ENCODE measurements at regions of chr2 and their contacts with region 1.

Region 1: DNA sequence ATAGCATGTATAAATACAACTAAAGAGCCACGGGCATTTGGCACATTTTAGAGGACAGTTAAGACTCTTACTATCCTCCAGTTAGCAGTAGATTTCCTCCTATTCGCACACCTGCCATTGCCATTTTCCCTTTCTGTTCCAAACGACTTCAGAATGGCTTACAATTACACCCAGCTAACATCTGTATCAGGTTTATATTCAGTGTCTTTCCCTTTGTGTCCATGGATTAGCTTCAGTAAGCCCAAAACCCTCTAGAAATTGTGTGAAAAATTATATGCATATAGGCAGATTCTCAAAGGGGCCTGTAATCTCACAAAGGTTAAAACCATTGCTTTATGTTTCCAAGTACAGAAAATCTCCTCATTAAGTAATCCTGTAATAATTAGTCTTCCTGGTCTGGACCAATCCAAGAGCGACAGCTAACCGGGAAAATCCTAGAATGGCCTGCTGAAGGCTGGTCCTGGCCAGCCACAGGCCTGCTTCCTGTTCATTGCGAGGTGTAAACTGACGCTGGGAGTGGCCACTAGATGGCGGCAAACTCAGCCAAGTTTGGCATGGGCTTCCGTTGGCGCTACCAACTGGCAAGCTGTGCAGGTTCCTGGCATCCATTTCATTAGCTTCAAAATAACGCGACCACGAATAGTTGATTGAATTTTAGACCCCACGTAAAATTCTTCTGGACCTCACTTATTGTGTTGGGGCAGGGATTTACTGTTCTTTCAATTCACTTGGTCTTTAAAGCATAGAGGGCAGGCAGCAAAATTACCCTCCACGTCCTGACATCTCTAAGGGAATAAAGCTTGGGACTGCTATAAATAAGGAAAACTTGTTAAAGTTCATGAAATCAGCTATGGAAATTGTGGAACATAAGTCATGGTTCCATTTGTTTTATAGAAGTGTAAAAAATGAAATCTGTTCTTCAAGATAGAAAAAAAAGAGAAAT is 17.1 kb downstream of the ARHGAP25 start:
- DNase-seq: peak; percentile 83
- H3K27ac ChIP-seq: no peak overlapping the region
- CTCF ChIP-seq: peak; percentile 86

Region 2: DNA sequence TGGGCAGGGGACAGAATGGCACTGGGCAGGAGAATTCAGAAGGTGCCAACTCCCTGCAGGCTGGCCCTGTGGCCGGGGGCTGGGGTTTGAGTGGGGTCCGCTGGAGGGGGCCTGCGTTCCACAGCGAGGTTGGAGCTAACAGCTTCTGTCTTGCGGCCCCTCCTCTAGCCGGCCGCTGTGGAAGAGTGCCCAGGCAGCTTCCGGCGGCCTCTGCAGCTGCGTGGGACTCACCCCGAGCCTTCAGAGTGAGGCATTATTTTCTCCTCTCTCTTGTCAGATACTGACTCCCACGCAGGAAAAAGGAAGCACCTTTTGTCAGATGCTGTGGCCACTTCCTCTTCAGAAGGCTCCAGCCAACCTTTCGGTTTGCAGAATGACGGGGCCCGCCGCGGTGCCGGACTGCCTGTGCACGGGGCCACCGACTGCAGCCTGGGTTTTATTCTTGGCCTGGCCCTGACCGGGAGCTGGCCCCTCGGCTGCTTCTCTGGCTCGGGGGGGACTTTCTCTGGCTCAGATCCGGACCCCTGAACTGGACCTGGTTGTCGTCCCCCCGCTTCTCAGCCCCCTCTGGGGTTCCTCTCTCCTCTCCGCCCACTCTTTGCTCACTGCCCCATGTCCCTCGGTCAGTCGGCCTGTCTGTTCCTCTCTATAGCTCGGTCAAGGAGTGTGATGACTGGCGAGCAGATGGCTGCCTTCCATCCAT is 23.1 kb after region 1 on chr2:
- CTCF ChIA-PET with region 1: no interaction called
- POLR2A ChIA-PET with region 1: no interaction called
- DNase-seq: no peak
- H3K27ac ChIP-seq: no peak overlapping the region
- CTCF ChIP-seq: no peak

Region 3: DNA sequence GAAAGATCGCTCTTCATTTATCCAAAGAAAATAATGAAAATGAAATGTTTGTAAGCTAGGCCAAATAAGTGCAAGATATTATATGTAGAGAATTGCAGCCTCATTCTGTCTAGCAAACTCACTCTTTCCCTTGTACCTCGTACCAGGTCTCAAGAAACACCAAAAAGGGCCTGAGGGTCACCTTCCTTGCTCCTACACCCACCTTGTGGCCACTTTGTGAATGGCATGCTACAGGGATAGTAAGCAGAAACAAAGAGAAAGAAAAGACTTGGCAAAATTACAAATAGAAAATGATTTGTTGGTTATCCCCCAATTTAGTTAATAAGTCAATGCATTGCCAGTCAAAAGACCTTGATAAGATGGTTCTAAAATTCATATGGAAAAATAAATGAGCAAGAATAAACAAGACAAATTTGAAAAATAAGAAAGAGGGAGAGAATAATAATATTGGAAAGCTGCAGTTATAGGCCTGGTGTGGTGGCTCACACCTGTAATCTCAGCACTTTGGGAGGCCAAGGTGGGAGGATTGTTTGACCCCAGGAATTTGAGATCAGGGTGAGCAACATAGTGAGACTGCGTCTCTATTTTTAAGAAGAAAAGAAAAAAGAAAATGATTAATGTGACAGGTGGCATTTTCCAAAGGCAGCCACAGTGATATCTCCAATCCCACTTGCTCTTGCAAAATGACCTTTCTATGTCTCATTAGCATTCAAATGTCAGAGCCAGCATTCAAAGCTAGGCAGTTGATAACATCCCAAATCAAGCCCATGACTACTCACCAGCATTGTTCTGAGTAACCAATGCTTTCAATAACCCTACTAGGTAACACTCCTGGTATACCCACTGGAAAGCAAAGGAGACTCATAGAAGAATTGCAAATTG is 158.4 kb after region 1 on chr2:
- CTCF ChIA-PET with region 1: interaction called, 14 read pairs
- POLR2A ChIA-PET with region 1: no interaction called
- DNase-seq: peak; percentile 65
- H3K27ac ChIP-seq: no peak overlapping the region
- CTCF ChIP-seq: peak; percentile 92

Region 4: DNA sequence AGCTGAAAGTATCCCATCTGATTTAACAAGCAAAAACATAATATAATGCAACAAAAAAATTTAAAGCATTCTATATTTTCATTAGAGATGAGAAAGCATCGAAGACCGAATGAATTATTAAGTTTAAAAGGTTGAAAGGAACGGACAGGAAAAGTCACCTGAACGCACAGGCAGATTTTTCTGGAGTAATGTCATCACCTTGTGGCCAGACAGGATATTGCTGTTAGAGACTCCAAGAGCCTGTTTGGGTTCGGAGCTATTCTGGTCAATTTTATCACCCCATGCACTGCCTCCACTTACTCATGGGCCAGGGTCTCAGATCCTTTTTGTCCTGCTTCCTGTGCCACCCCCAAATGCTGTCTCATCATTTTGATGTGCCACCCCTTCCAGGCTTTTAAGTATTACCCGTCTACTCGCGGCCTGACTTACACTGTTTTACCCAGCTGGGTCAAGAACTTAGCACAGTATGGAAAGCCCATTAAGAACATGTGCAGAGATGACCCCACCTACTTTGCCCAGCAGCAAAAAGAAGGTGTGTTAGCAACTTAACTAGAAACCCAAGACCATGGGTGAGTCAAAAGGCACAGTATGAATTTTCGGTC is 173.7 kb after region 1 on chr2:
- CTCF ChIA-PET with region 1: interaction called, 18 read pairs
- POLR2A ChIA-PET with region 1: no interaction called
- DNase-seq: peak; percentile 78
- H3K27ac ChIP-seq: no peak overlapping the region
- CTCF ChIP-seq: peak; percentile 98

Measured in RWPE1 (cell line).